Common myeloid progenitor, CD34-positive (primary cell): ENCODE measurements at regions of chr14 and their contacts with region 1.

Region 1: GRCh38 chr14:95442633-95443021 is 73.8 kb downstream of the SYNE3 start:
- DNase-seq: peak; percentile 64 to 82 (median 76)
- H3K4me3 ChIP-seq: no peak overlapping the region
- H3K27ac ChIP-seq: no peak overlapping the region
- H3K4me1 ChIP-seq: no peaks in the 10 kb centered on the region
- H3K27me3 ChIP-seq: no peaks in the 10 kb centered on the region

Region 2: DNA sequence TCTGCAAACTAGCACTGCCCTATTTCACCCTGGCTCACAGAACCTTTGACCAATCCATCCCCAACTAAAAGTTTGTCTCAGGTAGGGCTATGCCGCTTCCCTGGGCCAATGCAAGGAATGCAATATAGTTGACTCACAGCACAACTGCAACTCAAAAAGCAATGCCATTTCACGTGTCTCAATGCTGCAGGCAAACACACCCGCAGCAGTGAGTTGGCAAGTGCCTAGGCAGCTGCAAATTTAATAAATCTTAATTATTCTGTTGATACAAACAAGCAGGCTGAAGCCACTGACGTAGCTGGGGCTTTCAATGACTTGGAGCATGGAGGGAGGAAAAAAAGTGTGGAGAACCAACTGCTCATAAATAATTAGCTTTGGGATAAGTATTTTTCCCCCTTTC is 14.1 kb before region 1 on chr14:
- CTCF ChIA-PET with region 1: interaction called, 10 read pairs
- POLR2A ChIA-PET with region 1: no interaction called
- DNase-seq: no peak
- H3K4me3 ChIP-seq: no peak overlapping the region
- H3K27ac ChIP-seq: no peak overlapping the region
- H3K4me1 ChIP-seq: no peaks in the 10 kb centered on the region
- H3K27me3 ChIP-seq: no peaks in the 10 kb centered on the region

Region 3: GRCh38 chr14:95460647-95461478 is 18.2 kb after region 1 on chr14:
- CTCF ChIA-PET with region 1: interaction called, 41 read pairs
- POLR2A ChIA-PET with region 1: interaction called, 4 read pairs
- DNase-seq: no peak
- H3K4me3 ChIP-seq: no peak overlapping the region
- H3K27ac ChIP-seq: no peak overlapping the region
- H3K4me1 ChIP-seq: peaks cover 0 to 44% (median 40%) of the 10 kb centered on the region in 4 experiments
- H3K27me3 ChIP-seq: no peaks in the 10 kb centered on the region

Region 4: GRCh38 chr14:95690815-95691390 is 248.3 kb after region 1 on chr14:
- CTCF ChIA-PET with region 1: no interaction called
- POLR2A ChIA-PET with region 1: no interaction called
- DNase-seq: no peak
- H3K4me3 ChIP-seq: no peak overlapping the region
- H3K27ac ChIP-seq: no peak overlapping the region
- H3K4me1 ChIP-seq: no peaks in the 10 kb centered on the region
- H3K27me3 ChIP-seq: peaks cover 0 to 22% (median 2%) of the 10 kb centered on the region in 5 experiments